ENCODE measurements at regions of chr19 and their contacts with region 1.

Region 1: GRCh38 chr19:29873024-29873800 is 61.4 kb downstream of the CCNE1 start:
- DNase-seq: peak; percentile 41 to 84 (median 63)
- ATAC-seq: peak; percentile 82
- H3K4me3 ChIP-seq: peak overlapping the region; percentile 35
- H3K4me3 Mint-ChIP-seq: peak overlapping the region; percentile 55 to 84 (median 76)
- H3K27ac ChIP-seq: peak overlapping the region; percentile 14
- H3K27ac Mint-ChIP-seq: no peak overlapping the region
- H3K4me1 ChIP-seq: no peaks in the 10 kb centered on the region
- H3K4me1 Mint-ChIP-seq: peaks cover 0 to 15% (median 9%) of the 10 kb centered on the region in 7 donors
- H3K27me3 ChIP-seq: no peaks in the 10 kb centered on the region
- H3K27me3 Mint-ChIP-seq: peaks cover 6 to 25% (median 14%) of the 10 kb centered on the region in 5 donors

Region 2: GRCh38 chr19:29735800-29736199 is 137.4 kb before region 1 on chr19:
- CTCF ChIA-PET with region 1: interaction called, 90 read pairs
- POLR2A ChIA-PET with region 1: no interaction called
- intact Hi-C with region 1: loop called (anchors 1 kb)
- DNase-seq: no peak
- ATAC-seq: no peak
- H3K4me3 ChIP-seq: no peak overlapping the region
- H3K4me3 Mint-ChIP-seq: no peak overlapping the region
- H3K27ac ChIP-seq: no peak overlapping the region
- H3K27ac Mint-ChIP-seq: no peak overlapping the region
- H3K4me1 ChIP-seq: no peaks in the 10 kb centered on the region
- H3K4me1 Mint-ChIP-seq: no peaks in the 10 kb centered on the region
- H3K27me3 ChIP-seq: no peaks in the 10 kb centered on the region
- H3K27me3 Mint-ChIP-seq: peaks cover 0 to 16% (median 0%) of the 10 kb centered on the region in 5 donors

Region 3: DNA sequence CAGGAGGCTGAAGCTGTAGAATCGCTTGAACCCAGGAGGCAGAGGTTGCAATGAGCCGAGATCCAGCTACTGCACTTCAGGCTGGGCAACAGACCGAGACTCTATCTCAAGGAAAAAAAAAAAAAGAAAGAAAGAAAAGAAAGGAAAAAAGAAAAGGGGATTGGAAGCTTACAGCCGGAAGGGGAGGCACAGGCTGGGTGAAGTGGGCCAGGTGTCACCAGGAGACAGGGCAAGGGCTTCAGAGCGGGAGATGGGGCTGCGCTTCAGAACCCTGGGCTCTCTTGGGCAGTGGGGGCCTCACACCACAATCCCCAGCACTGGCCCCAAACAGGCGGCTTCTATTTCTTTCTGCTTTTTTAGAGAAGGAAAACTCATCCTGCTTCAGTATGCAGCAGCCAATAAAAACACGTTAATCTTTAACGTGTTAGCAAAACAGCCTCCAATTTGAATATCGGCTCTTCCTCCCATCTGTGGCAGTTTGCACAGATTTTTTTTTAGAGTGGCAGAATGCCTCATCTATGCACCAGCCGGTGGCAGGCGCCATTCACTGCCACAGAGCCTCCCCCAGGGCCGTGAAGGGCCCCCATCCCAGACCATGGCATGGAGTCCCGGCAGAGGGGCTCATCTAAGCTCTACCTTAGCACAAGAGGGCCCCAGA is 111.5 kb before region 1 on chr19:
- CTCF ChIA-PET with region 1: interaction called, 45 read pairs
- POLR2A ChIA-PET with region 1: interaction called, 5 read pairs
- intact Hi-C with region 1: loop called (anchors 1 kb)
- DNase-seq: no peak
- ATAC-seq: no peak
- H3K4me3 ChIP-seq: no peak overlapping the region
- H3K4me3 Mint-ChIP-seq: no peak overlapping the region
- H3K27ac ChIP-seq: no peak overlapping the region
- H3K27ac Mint-ChIP-seq: peak overlapping the region in 1 of 9 donors; percentile 30
- H3K4me1 ChIP-seq: no peaks in the 10 kb centered on the region
- H3K4me1 Mint-ChIP-seq: peaks cover 0 to 3% (median 0%) of the 10 kb centered on the region in 7 donors
- H3K27me3 ChIP-seq: no peaks in the 10 kb centered on the region
- H3K27me3 Mint-ChIP-seq: peaks cover 0 to 8% (median 0%) of the 10 kb centered on the region in 5 donors

Region 4: GRCh38 chr19:29771708-29772414 is 101.4 kb before region 1 on chr19:
- CTCF ChIA-PET with region 1: interaction called, 4 read pairs
- POLR2A ChIA-PET with region 1: interaction called, 3 read pairs
- intact Hi-C with region 1: loop called in 1 of 2 experiments (anchors 1 kb)
- DNase-seq: peak in 5 of 9 donors; percentile 16 to 31 (median 21)
- ATAC-seq: no peak
- H3K4me3 ChIP-seq: no peak overlapping the region
- H3K4me3 Mint-ChIP-seq: no peak overlapping the region
- H3K27ac ChIP-seq: no peak overlapping the region
- H3K27ac Mint-ChIP-seq: no peak overlapping the region
- H3K4me1 ChIP-seq: no peaks in the 10 kb centered on the region
- H3K4me1 Mint-ChIP-seq: peaks cover 0 to 8% (median 0%) of the 10 kb centered on the region in 7 donors
- H3K27me3 ChIP-seq: no peaks in the 10 kb centered on the region
- H3K27me3 Mint-ChIP-seq: no peaks in the 10 kb centered on the region

Region 5: GRCh38 chr19:29811125-29812079 is 61.8 kb before region 1 on chr19 and contains the start of gene CCNE1:
- CTCF ChIA-PET with region 1: interaction called, 6 read pairs
- POLR2A ChIA-PET with region 1: no interaction called
- intact Hi-C with region 1: loop called (anchors 2 kb)
- DNase-seq: peak; percentile 85 to 98 (median 91)
- ATAC-seq: peak; percentile 98
- H3K4me3 ChIP-seq: peak within 1 kb of the TSS; percentile 48
- H3K4me3 Mint-ChIP-seq: peak within 1 kb of the TSS; percentile 83 to 96 (median 90)
- H3K27ac ChIP-seq: peak within 1 kb of the TSS; percentile 69
- H3K27ac Mint-ChIP-seq: peak within 1 kb of the TSS; percentile 56 to 94 (median 85)
- H3K4me1 ChIP-seq: no peaks in the 10 kb centered on the region
- H3K4me1 Mint-ChIP-seq: peaks cover 0 to 36% (median 11%) of the 10 kb centered on the region in 7 donors
- H3K27me3 ChIP-seq: no peaks in the 10 kb centered on the region
- H3K27me3 Mint-ChIP-seq: no peaks in the 10 kb centered on the region
- total RNA-seq, gene CCNE1: 5.3 to 36.1 (median 6.6) TPM

Region 6: DNA sequence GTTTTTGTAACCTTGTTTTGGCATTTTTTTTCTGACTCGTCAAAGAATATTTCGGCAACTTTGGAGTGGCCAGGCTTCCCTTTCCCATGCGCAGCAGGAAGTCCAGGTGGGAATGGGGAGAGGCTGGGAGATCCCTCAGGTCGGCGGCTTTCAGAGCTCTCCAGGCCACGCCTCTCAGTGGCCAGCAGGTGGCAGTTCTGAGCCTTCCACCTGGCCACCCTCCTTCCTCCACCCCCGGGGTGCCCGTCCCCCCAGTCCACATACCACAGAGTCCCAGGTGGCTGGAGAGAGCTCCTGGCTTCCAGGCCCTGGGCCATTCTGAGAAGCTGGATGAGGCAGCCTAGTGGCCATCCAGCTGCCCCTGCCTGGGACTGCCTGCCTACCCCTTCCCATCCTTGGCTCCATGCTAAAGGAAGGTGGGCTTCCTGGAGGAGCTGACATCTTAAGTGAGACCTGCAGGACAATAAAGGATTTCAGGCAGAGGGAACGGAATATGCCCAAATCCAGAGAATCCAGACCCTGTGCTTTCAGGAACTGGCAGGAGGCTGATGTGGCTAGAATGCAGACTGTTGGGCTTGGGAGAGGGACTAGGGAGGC is 15.1 kb before region 1 on chr19:
- CTCF ChIA-PET with region 1: interaction called, 5 read pairs
- POLR2A ChIA-PET with region 1: no interaction called
- intact Hi-C with region 1: loop called in 1 of 2 experiments (anchors 1 kb)
- DNase-seq: peak in 7 of 9 donors; percentile 32 to 48 (median 37)
- ATAC-seq: peak; percentile 80
- H3K4me3 ChIP-seq: no peak overlapping the region
- H3K4me3 Mint-ChIP-seq: no peak overlapping the region
- H3K27ac ChIP-seq: no peak overlapping the region
- H3K27ac Mint-ChIP-seq: no peak overlapping the region
- H3K4me1 ChIP-seq: peaks cover 0 to 3% of the 10 kb centered on the region in 2 donors
- H3K4me1 Mint-ChIP-seq: peaks cover 0 to 11% (median 3%) of the 10 kb centered on the region in 7 donors
- H3K27me3 ChIP-seq: peaks cover 0 to 7% of the 10 kb centered on the region in 2 donors
- H3K27me3 Mint-ChIP-seq: peaks cover 0 to 11% (median 4%) of the 10 kb centered on the region in 5 donors

Region 7: DNA sequence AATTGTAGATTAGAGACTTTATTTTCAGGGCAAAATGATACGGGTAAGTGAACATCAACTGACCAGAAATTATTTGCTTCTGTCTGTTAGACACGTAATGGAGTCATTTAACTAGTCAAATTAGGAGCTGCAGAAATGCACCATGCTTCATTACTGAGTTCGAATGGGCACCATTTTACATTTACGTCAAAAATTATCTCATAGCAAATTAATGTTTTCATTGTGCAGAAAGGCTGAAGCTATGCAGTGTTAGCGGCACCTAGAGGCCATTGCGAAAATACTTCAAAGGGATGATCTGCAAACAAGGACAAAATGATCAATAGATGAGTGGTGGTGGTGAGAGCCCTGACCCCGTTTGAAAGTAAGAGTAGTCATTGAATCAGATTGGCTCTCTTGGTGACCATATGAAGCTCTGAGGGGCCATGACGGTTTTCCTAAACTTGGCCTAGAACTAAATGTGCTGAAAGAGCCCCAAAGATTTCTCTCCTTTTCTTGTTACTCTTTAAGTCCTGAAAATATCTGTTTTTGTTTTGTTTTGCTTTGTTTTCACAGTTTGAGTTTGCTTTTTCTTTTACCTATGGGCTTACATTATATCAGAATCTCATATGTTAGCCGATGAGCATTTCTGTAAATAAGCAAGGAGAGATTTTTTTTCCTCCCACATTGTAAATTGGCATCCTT is 776.9 kb after region 1 on chr19:
- CTCF ChIA-PET with region 1: no interaction called
- POLR2A ChIA-PET with region 1: no interaction called
- intact Hi-C with region 1: loop called in 1 of 2 experiments (anchors 10 kb)
- DNase-seq: peak in 3 of 9 donors; percentile 4 to 11 (median 9)
- ATAC-seq: no peak
- H3K4me3 ChIP-seq: no peak overlapping the region
- H3K4me3 Mint-ChIP-seq: no peak overlapping the region
- H3K27ac ChIP-seq: no peak overlapping the region
- H3K27ac Mint-ChIP-seq: no peak overlapping the region
- H3K4me1 ChIP-seq: no peaks in the 10 kb centered on the region
- H3K4me1 Mint-ChIP-seq: no peaks in the 10 kb centered on the region
- H3K27me3 ChIP-seq: no peaks in the 10 kb centered on the region
- H3K27me3 Mint-ChIP-seq: peaks cover 3 to 51% (median 36%) of the 10 kb centered on the region in 5 donors